T-cell (primary cell): ENCODE measurements at regions of chr2 and their contacts with region 1.

Region 1: GRCh38 chr2:3505771-3506170 is 13.6 kb downstream of the ADI1 start:
- DNase-seq: no peak
- ATAC-seq: no peak
- H3K4me3 ChIP-seq: no peak overlapping the region
- H3K4me3 Mint-ChIP-seq: no peak overlapping the region
- H3K27ac ChIP-seq: no peak overlapping the region
- H3K27ac Mint-ChIP-seq: no peak overlapping the region
- H3K4me1 ChIP-seq: no peaks in the 10 kb centered on the region
- H3K4me1 Mint-ChIP-seq: peaks cover 5 to 28% (median 13%) of the 10 kb centered on the region in 3 donors
- H3K27me3 ChIP-seq: no peaks in the 10 kb centered on the region
- H3K27me3 Mint-ChIP-seq: no peaks in the 10 kb centered on the region

Region 2: DNA sequence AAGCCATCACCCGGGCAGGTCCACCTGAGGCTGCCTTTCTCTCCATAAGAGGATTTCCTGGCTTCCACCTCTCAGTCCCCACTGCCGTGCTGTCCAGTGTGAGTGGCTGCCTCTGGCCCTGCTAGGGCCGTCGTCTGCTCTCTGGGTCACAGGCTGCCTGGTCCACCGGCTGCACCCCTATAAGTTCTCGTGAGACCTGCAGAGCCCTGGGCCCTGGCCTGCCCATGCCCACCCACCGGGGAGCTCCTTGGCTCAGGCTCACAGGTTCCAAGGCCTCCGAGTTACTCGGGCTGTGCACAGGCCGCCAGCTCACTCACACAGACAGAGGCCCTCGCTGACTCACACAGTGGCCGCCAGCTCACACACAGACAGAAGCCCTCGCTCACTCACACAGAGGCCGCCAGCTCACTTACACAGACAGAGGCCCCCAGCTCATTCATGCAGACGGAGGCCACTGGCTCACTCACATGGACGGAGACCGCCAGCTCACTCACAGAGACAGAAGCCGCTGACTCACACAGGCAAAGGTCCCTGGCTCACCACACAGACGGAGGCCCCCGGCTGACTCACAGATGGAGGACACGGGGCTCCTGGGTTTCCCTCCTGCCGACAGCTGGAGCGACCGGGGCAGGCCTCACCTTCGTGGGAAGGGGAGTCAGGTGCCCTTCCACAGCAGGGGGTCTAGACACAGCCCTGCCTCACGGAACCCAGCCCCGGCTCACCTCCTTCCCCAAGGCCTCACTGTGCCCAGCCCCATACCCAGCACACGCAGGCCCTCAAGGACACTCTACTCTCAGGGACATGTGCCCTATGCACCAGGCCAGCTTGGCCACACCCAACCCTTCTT is 840.6 kb before region 1 on chr2:
- CTCF ChIA-PET with region 1: no interaction called
- POLR2A ChIA-PET with region 1: no interaction called
- DNase-seq: no peak
- ATAC-seq: no peak
- H3K4me3 ChIP-seq: no peak overlapping the region
- H3K4me3 Mint-ChIP-seq: no peak overlapping the region
- H3K27ac ChIP-seq: no peak overlapping the region
- H3K27ac Mint-ChIP-seq: no peak overlapping the region
- H3K4me1 ChIP-seq: no peaks in the 10 kb centered on the region
- H3K4me1 Mint-ChIP-seq: no peaks in the 10 kb centered on the region
- H3K27me3 ChIP-seq: peaks cover 0 to 6% of the 10 kb centered on the region in 2 experiments
- H3K27me3 Mint-ChIP-seq: no peaks in the 10 kb centered on the region

Region 3: DNA sequence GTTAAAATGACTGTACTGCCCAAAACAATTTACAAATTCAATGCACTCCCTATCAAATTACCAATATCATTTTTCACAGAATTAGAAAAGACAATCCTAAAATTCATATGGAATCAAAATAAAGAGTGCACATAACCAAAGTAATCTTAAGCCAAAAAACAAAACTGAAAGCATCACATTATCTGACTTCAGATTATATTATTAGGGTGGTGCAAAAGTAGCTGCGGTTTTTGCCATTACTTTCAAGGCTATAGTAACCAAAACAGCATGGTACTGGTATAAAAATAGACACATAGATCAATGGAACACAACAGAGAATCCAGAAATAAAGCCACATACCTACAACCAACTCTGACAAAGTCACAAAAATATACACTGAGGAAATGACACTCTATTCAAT is 524.8 kb before region 1 on chr2:
- CTCF ChIA-PET with region 1: no interaction called
- POLR2A ChIA-PET with region 1: no interaction called
- DNase-seq: no peak
- ATAC-seq: no peak
- H3K4me3 ChIP-seq: no peak overlapping the region
- H3K4me3 Mint-ChIP-seq: no peak overlapping the region
- H3K27ac ChIP-seq: no peak overlapping the region
- H3K27ac Mint-ChIP-seq: no peak overlapping the region
- H3K4me1 ChIP-seq: no peaks in the 10 kb centered on the region
- H3K4me1 Mint-ChIP-seq: no peaks in the 10 kb centered on the region
- H3K27me3 ChIP-seq: no peaks in the 10 kb centered on the region
- H3K27me3 Mint-ChIP-seq: peaks cover 3% of the 10 kb centered on the region in 2 donors

Region 4: GRCh38 chr2:3519255-3520205 is 13.8 kb after region 1 on chr2 and contains the start of gene ADI1:
- CTCF ChIA-PET with region 1: no interaction called
- POLR2A ChIA-PET with region 1: interaction called in 1 of 2 experiments, 11 read pairs
- DNase-seq: peak in 34 of 35 experiments; percentile 45 to 83 (median 68)
- ATAC-seq: peak; percentile 69 to 71 (median 70)
- H3K4me3 ChIP-seq: peak within 1 kb of the TSS; percentile 73 to 90
- H3K4me3 Mint-ChIP-seq: peak within 1 kb of the TSS; percentile 87 to 90 (median 89)
- H3K27ac ChIP-seq: peak within 1 kb of the TSS; percentile 90
- H3K27ac Mint-ChIP-seq: peak within 1 kb of the TSS; percentile 91 to 93
- H3K4me1 ChIP-seq: peaks cover 11 to 23% of the 10 kb centered on the region in 2 experiments
- H3K4me1 Mint-ChIP-seq: peaks cover 34 to 45% (median 40%) of the 10 kb centered on the region in 3 donors
- H3K27me3 ChIP-seq: no peaks in the 10 kb centered on the region
- H3K27me3 Mint-ChIP-seq: no peaks in the 10 kb centered on the region
- total RNA-seq, gene ADI1: 20.9 to 29.0 (median 28.3) TPM